ENCODE measurements at regions of chr1 and their contacts with region 1.

Region 1: DNA sequence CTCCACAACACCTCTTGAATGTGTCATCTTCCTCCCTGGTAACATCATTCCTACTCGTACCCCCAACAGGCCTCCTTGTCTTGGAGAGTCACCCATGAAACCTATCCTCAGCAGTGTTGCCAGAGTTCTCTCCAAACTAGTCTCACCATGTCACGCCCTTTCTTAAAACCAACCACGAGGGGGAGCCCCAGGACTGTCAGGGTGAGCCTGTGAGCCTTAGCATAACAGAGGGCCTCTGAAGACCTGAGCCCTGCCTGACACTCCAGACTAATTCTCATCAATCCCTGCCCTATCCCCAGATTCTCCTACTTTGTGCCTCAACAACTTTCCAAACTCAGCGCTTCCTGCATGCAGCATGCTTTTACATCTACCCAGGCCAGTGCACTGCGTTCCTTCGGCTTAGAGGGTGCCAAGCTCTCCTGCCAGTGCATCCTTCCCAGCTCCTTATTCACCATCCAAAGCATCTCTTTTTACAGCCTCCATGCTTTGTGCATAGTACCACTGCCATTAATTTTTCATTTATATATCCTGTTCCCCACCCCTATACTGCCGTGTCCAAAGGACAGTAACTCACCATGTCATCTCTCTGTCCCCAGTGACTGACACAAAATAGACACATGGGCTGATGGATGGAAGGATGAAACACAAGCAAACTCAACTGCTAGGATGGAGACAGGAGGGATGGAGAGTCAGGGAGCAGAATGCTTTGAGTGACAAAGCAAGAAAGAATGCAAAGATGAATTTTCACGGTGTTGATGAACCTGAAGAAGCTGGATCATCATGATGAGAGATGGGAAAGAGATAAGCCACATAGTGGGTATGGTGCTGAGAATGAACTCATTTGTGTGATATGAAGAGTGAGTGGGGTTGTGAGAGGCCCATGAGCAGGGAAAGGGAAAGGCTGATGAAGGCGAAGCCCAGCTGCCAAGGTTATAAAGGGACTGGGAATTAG is 34.0 kb downstream of the ZNF697 start:
- DNase-seq: peak; percentile 73 to 80 (median 75)
- H3K4me3 ChIP-seq: no peak overlapping the region
- H3K4me3 Mint-ChIP-seq: no peak overlapping the region
- H3K27ac ChIP-seq: no peak overlapping the region
- H3K27ac Mint-ChIP-seq: no peak overlapping the region
- H3K4me1 ChIP-seq: peaks cover 4 to 18% of the 10 kb centered on the region in 2 donors
- H3K4me1 Mint-ChIP-seq: peaks cover 16% of the 10 kb centered on the region
- H3K27me3 ChIP-seq: no peaks in the 10 kb centered on the region
- H3K27me3 Mint-ChIP-seq: peaks cover 1 to 5% (median 2%) of the 10 kb centered on the region in 3 donors
- CTCF ChIP-seq: peak; percentile 85

Region 2: DNA sequence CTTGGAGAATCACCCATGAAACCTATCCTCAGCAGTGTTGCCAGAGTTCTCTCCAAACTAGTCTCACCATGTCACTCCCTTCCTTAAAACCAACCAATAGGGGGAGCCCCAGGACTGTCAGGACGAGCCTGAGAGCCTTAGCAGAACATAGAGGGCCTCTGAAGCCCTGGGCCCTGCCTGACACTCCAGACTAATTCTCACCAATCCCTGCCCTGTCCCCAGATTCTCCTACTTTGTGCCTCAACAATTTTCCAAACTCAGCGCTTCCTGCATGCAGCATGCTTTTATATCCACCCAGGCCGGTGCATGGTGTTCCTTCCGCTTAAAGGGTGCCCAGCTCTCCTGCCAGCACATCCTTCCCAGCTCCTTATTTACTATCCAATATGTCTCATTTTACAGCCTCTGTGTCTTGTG is 64.3 kb before region 1 on chr1:
- intact Hi-C with region 1: loop called (anchors 5 to 10 kb)
- DNase-seq: peak; percentile 69 to 72 (median 69)
- H3K4me3 ChIP-seq: no peak overlapping the region
- H3K4me3 Mint-ChIP-seq: no peak overlapping the region
- H3K27ac ChIP-seq: no peak overlapping the region
- H3K27ac Mint-ChIP-seq: peak overlapping the region in 2 of 7 donors; percentile 2 to 22
- H3K4me1 ChIP-seq: peaks cover 16 to 34% of the 10 kb centered on the region in 2 donors
- H3K4me1 Mint-ChIP-seq: peaks cover 31% of the 10 kb centered on the region
- H3K27me3 ChIP-seq: no peaks in the 10 kb centered on the region
- H3K27me3 Mint-ChIP-seq: peaks cover 0 to 4% (median 1%) of the 10 kb centered on the region in 3 donors
- CTCF ChIP-seq: peak; percentile 80

Region 3: GRCh38 chr1:119594376-119594775 is 19.7 kb before region 1 on chr1:
- intact Hi-C with region 1: no loop called
- DNase-seq: no peak
- H3K4me3 ChIP-seq: no peak overlapping the region
- H3K4me3 Mint-ChIP-seq: no peak overlapping the region
- H3K27ac ChIP-seq: no peak overlapping the region
- H3K27ac Mint-ChIP-seq: peak overlapping the region in 1 of 7 donors; percentile 21
- H3K4me1 ChIP-seq: peaks cover 14 to 23% of the 10 kb centered on the region in 2 donors
- H3K4me1 Mint-ChIP-seq: peaks cover 20% of the 10 kb centered on the region
- H3K27me3 ChIP-seq: no peaks in the 10 kb centered on the region
- H3K27me3 Mint-ChIP-seq: peaks cover 0 to 2% (median 1%) of the 10 kb centered on the region in 3 donors
- CTCF ChIP-seq: no peak

Region 4: GRCh38 chr1:119635811-119636390 is 21.9 kb after region 1 on chr1:
- intact Hi-C with region 1: loop called in 1 of 2 experiments (anchors 2 kb)
- DNase-seq: no peak
- H3K4me3 ChIP-seq: no peak overlapping the region
- H3K4me3 Mint-ChIP-seq: no peak overlapping the region
- H3K27ac ChIP-seq: no peak overlapping the region
- H3K27ac Mint-ChIP-seq: no peak overlapping the region
- H3K4me1 ChIP-seq: peaks cover 10 to 12% of the 10 kb centered on the region in 2 donors
- H3K4me1 Mint-ChIP-seq: peaks cover 14% of the 10 kb centered on the region
- H3K27me3 ChIP-seq: peaks cover 13 to 22% of the 10 kb centered on the region in 2 donors
- H3K27me3 Mint-ChIP-seq: peaks cover 16 to 24% (median 24%) of the 10 kb centered on the region in 3 donors
- CTCF ChIP-seq: no peak

Region 5: GRCh38 chr1:119662034-119662437 is 48.0 kb after region 1 on chr1:
- intact Hi-C with region 1: loop called in 1 of 2 experiments (anchors 5 kb)
- DNase-seq: no peak
- H3K4me3 ChIP-seq: no peak overlapping the region
- H3K4me3 Mint-ChIP-seq: no peak overlapping the region
- H3K27ac ChIP-seq: no peak overlapping the region
- H3K27ac Mint-ChIP-seq: no peak overlapping the region
- H3K4me1 ChIP-seq: no peaks in the 10 kb centered on the region
- H3K4me1 Mint-ChIP-seq: no peaks in the 10 kb centered on the region
- H3K27me3 ChIP-seq: no peaks in the 10 kb centered on the region
- H3K27me3 Mint-ChIP-seq: peaks cover 2 to 7% (median 6%) of the 10 kb centered on the region in 3 donors
- CTCF ChIP-seq: no peak

Region 6: GRCh38 chr1:119675349-119676345 is 61.6 kb after region 1 on chr1:
- intact Hi-C with region 1: loop called in 1 of 2 experiments (anchors 1 kb)
- DNase-seq: peak; percentile 74 to 83 (median 82)
- H3K4me3 ChIP-seq: peak overlapping the region in 2 of 3 experiments; percentile 49 to 70
- H3K4me3 Mint-ChIP-seq: peak overlapping the region; percentile 76 to 89
- H3K27ac ChIP-seq: no peak overlapping the region
- H3K27ac Mint-ChIP-seq: peak overlapping the region in 5 of 7 donors; percentile 53 to 86 (median 72)
- H3K4me1 ChIP-seq: peaks cover 7 to 9% of the 10 kb centered on the region in 2 donors
- H3K4me1 Mint-ChIP-seq: peaks cover 13% of the 10 kb centered on the region
- H3K27me3 ChIP-seq: no peaks in the 10 kb centered on the region
- H3K27me3 Mint-ChIP-seq: peaks cover 1 to 12% (median 4%) of the 10 kb centered on the region in 3 donors
- CTCF ChIP-seq: peak; percentile 67